ENCODE measurements at regions of chr19 and their contacts with region 1.

Region 1: GRCh38 chr19:1275260-1275975 is at the start of gene FAM174C:
- DNase-seq: peak; percentile 93 to 97 (median 95)
- H3K4me3 ChIP-seq: peak within 1 kb of the TSS; percentile 55
- H3K27ac ChIP-seq: peak within 1 kb of the TSS; percentile 97 to 99
- H3K4me1 ChIP-seq: peaks cover 28% of the 10 kb centered on the region
- H3K27me3 ChIP-seq: no peaks in the 10 kb centered on the region
- CTCF ChIP-seq: no peak
- EP300 ChIP-seq: no peak
- POLR2A ChIP-seq: peak; percentile 59
- total RNA-seq, gene FAM174C: 21.7 to 72.5 (median 26.7) TPM

Region 2: GRCh38 chr19:1241417-1242095 is 33.9 kb before region 1 on chr19 and contains the start of gene ATP5F1D:
- intact Hi-C with region 1: no loop called
- DNase-seq: peak; percentile 93 to 96 (median 94)
- H3K4me3 ChIP-seq: peak within 1 kb of the TSS; percentile 78
- H3K27ac ChIP-seq: peak within 1 kb of the TSS; percentile 81 to 87
- H3K4me1 ChIP-seq: peaks cover 26% of the 10 kb centered on the region
- H3K27me3 ChIP-seq: no peaks in the 10 kb centered on the region
- CTCF ChIP-seq: no peak
- EP300 ChIP-seq: no peak
- POLR2A ChIP-seq: peak; percentile 60
- total RNA-seq, gene ATP5F1D: 71.9 to 218 (median 148) TPM

Region 3: GRCh38 chr19:1336079-1336684 is 60.8 kb after region 1 on chr19:
- intact Hi-C with region 1: loop called in 1 of 4 experiments (anchors 10 kb)
- DNase-seq: no peak
- H3K4me3 ChIP-seq: no peak overlapping the region
- H3K27ac ChIP-seq: no peak overlapping the region
- H3K4me1 ChIP-seq: no peaks in the 10 kb centered on the region
- H3K27me3 ChIP-seq: no peaks in the 10 kb centered on the region
- CTCF ChIP-seq: no peak
- EP300 ChIP-seq: no peak
- POLR2A ChIP-seq: no peak

Region 4: DNA sequence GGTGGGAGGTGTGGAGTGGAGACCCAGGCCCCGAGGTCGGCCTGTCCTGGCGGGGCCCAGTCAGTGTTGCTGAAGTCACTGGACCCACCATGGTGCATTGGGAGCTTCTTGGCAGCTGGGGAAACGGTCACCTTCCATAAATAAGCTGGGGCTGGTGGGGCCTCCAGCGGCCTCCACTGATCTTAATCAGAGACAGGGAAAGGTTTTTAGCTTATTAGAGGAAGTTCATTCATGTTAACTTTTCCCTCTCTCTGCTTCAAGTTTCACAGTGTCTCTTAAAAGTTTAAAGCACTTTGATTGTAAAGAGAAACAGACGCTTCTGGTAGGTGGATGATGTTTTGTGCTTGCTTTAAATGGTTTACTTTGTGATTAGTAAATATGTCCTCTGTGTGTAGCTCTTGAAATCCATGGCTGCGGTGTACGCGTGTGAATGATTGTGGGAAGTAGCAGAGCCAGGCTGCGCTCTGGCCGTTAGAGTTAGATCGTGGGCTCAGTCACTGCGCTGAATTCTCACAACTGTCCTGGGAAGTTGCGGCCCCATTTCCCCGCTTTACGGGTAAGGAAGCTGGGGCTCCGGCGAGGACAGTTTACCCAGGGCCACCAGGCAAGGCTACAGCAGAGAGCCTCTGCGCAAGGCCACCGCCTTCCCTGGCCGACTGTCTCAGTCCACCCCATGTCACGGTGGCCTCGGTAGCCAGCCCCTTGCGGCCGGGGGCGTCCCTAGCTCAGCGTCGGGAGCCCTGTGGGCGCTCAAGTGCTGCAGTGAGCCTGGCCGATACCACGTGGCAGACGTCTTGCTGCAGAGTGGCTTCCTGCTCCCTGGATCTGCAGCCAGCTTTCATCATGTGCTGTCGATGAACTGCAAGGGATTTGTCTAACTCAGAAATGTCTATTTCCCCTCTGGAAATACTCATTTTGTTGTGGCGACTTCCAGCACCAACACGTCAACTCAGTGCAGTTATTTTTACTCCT is 91.8 kb after region 1 on chr19:
- intact Hi-C with region 1: no loop called
- DNase-seq: no peak
- H3K4me3 ChIP-seq: no peak overlapping the region
- H3K27ac ChIP-seq: no peak overlapping the region
- H3K4me1 ChIP-seq: peaks cover 3% of the 10 kb centered on the region
- H3K27me3 ChIP-seq: no peaks in the 10 kb centered on the region
- CTCF ChIP-seq: no peak
- EP300 ChIP-seq: no peak
- POLR2A ChIP-seq: no peak

Region 5: GRCh38 chr19:1383311-1384084 is 108.1 kb after region 1 on chr19 and contains the start of gene NDUFS7:
- intact Hi-C with region 1: loop called in 1 of 4 experiments (anchors 10 kb)
- DNase-seq: peak; percentile 89 to 98 (median 93)
- H3K4me3 ChIP-seq: peak within 1 kb of the TSS; percentile 94
- H3K27ac ChIP-seq: peak within 1 kb of the TSS; percentile 29 to 59
- H3K4me1 ChIP-seq: peaks cover 3% of the 10 kb centered on the region
- H3K27me3 ChIP-seq: no peaks in the 10 kb centered on the region
- CTCF ChIP-seq: peak in 2 of 3 donors; percentile 60 to 83
- EP300 ChIP-seq: no peak
- POLR2A ChIP-seq: peak; percentile 51
- total RNA-seq, gene NDUFS7: 65.6 to 112 (median 79.9) TPM

Region 6: DNA sequence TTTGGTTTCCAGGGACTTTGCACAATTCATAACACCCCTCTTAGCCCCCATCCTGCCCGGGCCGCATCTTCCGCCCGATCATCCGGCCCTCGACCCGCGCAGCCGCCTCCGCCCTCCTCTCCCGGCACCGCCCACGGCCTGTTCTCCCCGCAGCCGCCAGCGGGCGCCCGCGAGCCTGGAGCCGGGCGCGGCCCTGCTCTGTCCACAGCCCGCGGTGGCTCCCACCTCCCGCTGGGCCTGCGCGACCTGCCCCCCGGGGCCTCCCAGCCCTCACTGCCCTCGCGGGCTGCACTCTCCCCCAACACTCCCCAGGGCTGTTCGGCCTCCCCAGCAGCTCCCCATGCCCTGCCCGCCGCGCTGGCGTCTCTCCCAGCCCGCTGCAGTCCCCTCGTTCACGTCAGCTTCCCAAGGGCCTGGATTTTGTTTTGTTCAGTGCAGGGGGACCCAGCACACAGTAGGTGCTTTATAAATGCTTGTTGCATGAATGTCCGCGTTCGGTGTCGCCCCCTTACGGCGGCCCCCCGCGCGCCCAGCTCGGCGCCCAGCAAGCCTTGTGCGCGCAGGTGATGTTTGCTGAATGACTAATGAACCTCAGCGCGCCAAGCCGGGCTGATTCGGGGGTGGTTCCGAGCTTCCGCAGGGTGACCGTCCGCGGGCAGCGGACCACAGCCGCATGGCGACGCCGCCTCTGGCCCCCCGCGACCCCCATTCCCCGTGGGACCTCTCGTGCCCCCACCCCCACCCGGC is 169.9 kb after region 1 on chr19:
- intact Hi-C with region 1: loop called in 2 of 4 experiments (anchors 10 kb)
- DNase-seq: peak; percentile 43 to 80 (median 62)
- H3K4me3 ChIP-seq: peak overlapping the region; percentile 10
- H3K27ac ChIP-seq: no peak overlapping the region
- H3K4me1 ChIP-seq: peaks cover 5% of the 10 kb centered on the region
- H3K27me3 ChIP-seq: peaks cover 3% of the 10 kb centered on the region
- CTCF ChIP-seq: peak; percentile 83 to 91 (median 85)
- EP300 ChIP-seq: no peak
- POLR2A ChIP-seq: no peak

Region 7: GRCh38 chr19:1592755-1593500 is 317.5 kb after region 1 on chr19 and contains the start of gene MBD3:
- intact Hi-C with region 1: no loop called
- DNase-seq: peak; percentile 88 to 94 (median 92)
- H3K4me3 ChIP-seq: peak within 1 kb of the TSS; percentile 57
- H3K27ac ChIP-seq: peak within 1 kb of the TSS; percentile 95 to 98
- H3K4me1 ChIP-seq: peaks cover 7% of the 10 kb centered on the region
- H3K27me3 ChIP-seq: no peaks in the 10 kb centered on the region
- CTCF ChIP-seq: no peak
- EP300 ChIP-seq: no peak
- POLR2A ChIP-seq: no peak
- total RNA-seq, gene MBD3: 53.3 to 94.7 (median 74.4) TPM